Motor neuron (in vitro differentiated cells): ENCODE measurements at regions of chr12 and their contacts with region 1.

Region 1: DNA sequence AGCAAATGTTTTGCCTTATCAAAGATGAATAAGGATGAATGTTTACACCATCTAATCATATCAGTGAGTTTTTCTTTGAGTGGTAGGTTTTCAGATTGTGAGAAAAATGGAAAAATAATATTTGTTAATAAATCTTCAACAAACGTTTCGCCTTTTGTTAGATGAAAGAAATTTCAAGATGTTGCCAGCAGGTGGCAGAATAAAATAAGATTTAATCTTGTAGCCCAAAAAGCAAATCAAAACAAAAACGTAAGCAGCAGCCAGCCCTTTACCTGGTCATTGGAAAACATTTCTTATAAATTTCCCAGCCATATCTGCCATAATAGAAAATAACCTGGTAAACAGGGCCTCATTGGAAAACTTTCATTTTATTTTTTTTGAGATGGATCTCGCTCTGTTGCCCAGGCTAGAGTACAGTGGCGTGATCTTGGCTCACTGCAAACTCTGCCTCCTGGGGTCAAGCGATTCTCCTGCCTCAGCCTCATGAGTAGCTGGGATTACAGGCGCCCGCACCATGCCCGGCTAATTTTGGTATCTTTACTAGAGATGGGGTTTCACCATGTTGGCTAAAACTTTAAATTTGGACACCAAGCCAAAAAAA is 15.4 kb upstream of the TMEM120B start:
- ATAC-seq: peak in 1 of 8 experiments; percentile 7
- H3K4me3 ChIP-seq: no peak overlapping the region
- H3K27ac ChIP-seq: no peak overlapping the region
- H3K4me1 ChIP-seq: no peaks in the 10 kb centered on the region

Region 2: GRCh38 chr12:121649819-121650353 is 47.3 kb before region 1 on chr12:
- in situ Hi-C with region 1: no loop called
- ATAC-seq: no peak
- H3K4me3 ChIP-seq: no peak overlapping the region
- H3K27ac ChIP-seq: no peak overlapping the region
- H3K4me1 ChIP-seq: peaks cover 0 to 2% of the 10 kb centered on the region in 2 donors

Region 3: GRCh38 chr12:121773011-121773777 is 76.0 kb after region 1 on chr12:
- in situ Hi-C with region 1: loop called in 4 of 9 experiments (anchors 10 to 25 kb)
- ATAC-seq: peak; percentile 55 to 86 (median 70)
- H3K4me3 ChIP-seq: no peak overlapping the region
- H3K27ac ChIP-seq: no peak overlapping the region
- H3K4me1 ChIP-seq: peaks cover 0 to 9% of the 10 kb centered on the region in 2 donors

Region 4: GRCh38 chr12:121793838-121794533 is 96.8 kb after region 1 on chr12:
- in situ Hi-C with region 1: loop called in 3 of 9 experiments (anchors 10 to 25 kb)
- ATAC-seq: peak; percentile 36 to 69 (median 56)
- H3K4me3 ChIP-seq: peak overlapping the region; percentile 16 to 34 (median 28)
- H3K27ac ChIP-seq: peak overlapping the region; percentile 27 to 66
- H3K4me1 ChIP-seq: peaks cover 48 to 50% of the 10 kb centered on the region in 2 donors